RWPE1 (cell line): ENCODE measurements at regions of chr5 and their contacts with region 1.

Region 1: DNA sequence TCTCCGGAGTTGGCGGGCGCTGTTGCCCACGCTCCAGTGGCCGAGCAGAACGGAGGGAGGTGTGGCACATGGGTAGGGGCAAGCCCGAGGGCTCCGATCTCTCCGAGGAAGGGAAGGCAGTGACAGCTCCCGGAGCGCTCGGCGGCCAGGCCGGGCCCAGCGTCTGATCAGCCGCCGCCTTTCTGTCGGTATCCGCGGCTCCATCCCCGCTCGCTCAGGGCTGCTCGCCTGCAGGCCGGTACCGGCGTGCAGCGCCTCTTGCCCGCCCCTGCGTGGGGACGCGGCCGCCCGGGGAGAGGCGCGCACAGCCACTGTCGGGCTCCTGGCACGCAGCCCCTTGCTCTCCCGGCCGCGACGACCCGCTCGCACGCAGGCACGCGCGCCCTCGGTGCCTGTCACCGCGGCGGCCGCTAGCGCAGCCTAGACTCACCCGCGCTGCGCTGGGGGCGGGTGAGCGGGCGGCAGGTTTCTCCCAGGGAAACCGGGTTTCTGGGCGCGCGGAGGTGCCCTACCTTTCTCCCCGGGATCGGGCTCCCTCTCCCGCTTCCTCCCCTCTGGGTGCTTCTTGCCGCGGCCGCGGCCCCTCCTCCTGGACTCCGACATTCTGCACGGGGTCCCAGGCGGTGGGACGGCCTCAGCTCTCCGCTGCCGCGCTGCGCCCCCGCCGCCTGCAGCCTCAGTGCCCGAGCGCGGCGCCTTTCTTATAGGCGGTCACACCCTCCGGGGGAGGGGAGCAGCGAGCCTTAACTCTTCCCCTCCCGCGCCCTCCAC is 108.4 kb downstream of the PSD2 start:
- DNase-seq: no peak
- H3K27ac ChIP-seq: no peak overlapping the region
- CTCF ChIP-seq: no peak

Region 2: GRCh38 chr5:140042643-140043500 is 138.9 kb after region 1 on chr5 and contains the start of gene NRG2:
- CTCF ChIA-PET with region 1: interaction called, 11 read pairs
- POLR2A ChIA-PET with region 1: no interaction called
- DNase-seq: peak; percentile 69
- H3K27ac ChIP-seq: peak within 1 kb of the TSS; percentile 74
- CTCF ChIP-seq: peak; percentile 63